CD4-positive, alpha-beta T cell (primary cell): ENCODE measurements at regions of chr15 and their contacts with region 1.

Region 1: GRCh38 chr15:40906091-40906990 is 12.1 kb downstream of the VPS18 start:
- DNase-seq: peak; percentile 54 to 84 (median 66)
- ATAC-seq: peak; percentile 58
- H3K4me3 ChIP-seq: peak overlapping the region; percentile 70
- H3K4me3 Mint-ChIP-seq: peak overlapping the region; percentile 89
- H3K27ac ChIP-seq: peak overlapping the region; percentile 67 to 78
- H3K27ac Mint-ChIP-seq: peak overlapping the region; percentile 71
- H3K4me1 ChIP-seq: peaks cover 51% of the 10 kb centered on the region
- H3K4me1 Mint-ChIP-seq: peaks cover 37% of the 10 kb centered on the region
- H3K27me3 ChIP-seq: no peaks in the 10 kb centered on the region
- H3K27me3 Mint-ChIP-seq: no peaks in the 10 kb centered on the region
- CTCF ChIP-seq: peak; percentile 89

Region 2: GRCh38 chr15:40857601-40858341 is 48.6 kb before region 1 on chr15:
- CTCF ChIA-PET with region 1: interaction called, 21 read pairs
- POLR2A ChIA-PET with region 1: interaction called, 5 read pairs
- intact Hi-C with region 1: no loop called
- DNase-seq: peak; percentile 63 to 87 (median 77)
- ATAC-seq: peak; percentile 96
- H3K4me3 ChIP-seq: no peak overlapping the region
- H3K4me3 Mint-ChIP-seq: no peak overlapping the region
- H3K27ac ChIP-seq: no peak overlapping the region
- H3K27ac Mint-ChIP-seq: no peak overlapping the region
- H3K4me1 ChIP-seq: peaks cover 18% of the 10 kb centered on the region
- H3K4me1 Mint-ChIP-seq: peaks cover 14% of the 10 kb centered on the region
- H3K27me3 ChIP-seq: no peaks in the 10 kb centered on the region
- H3K27me3 Mint-ChIP-seq: no peaks in the 10 kb centered on the region
- CTCF ChIP-seq: peak; percentile 85

Region 3: DNA sequence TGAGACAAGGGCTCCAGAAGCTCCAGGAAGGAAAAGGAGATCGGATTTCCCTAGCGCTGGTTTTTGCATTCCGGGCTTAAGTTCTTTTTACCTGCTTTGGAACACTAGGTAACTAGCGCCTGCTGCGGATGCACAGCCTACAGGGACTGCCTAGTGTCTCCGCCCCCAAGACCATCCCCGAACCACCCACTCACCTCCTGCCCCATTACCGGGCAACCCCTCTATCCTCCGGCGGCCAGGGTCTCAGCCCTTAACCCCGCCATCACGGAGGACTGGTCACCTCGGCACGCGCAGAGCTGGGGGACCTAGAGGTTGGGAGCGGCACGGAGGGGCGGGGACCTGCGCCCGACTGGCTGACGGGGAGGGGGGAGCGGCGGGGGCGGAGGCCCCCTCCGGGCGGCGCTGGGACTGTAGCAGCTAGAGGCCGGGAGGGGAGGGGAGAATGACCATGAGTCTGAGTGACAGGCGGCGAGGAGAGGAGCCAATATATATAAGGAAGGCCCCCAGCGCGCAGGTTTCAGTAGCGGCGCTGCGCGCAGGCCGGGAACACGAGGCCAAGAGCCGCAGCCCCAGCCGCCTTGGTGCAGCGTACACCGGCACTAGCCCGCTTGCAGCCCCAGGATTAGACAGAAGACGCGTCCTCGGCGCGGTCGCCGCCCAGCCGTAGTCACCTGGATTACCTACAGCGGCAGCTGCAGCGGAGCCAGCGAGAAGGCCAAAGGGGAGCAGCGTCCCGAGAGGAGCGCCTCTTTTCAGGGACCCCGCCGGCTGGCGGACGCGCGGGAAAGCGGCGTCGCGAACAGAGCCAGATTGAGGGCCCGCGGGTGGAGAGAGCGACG is 22.7 kb after region 1 on chr15 and contains the start of gene DLL4:
- CTCF ChIA-PET with region 1: interaction called, 10 read pairs
- POLR2A ChIA-PET with region 1: interaction called, 23 read pairs
- intact Hi-C with region 1: no loop called
- DNase-seq: peak in 5 of 14 experiments; percentile 36 to 67 (median 48)
- ATAC-seq: peak; percentile 50
- H3K4me3 ChIP-seq: peak within 1 kb of the TSS; percentile 49
- H3K4me3 Mint-ChIP-seq: peak within 1 kb of the TSS; percentile 81
- H3K27ac ChIP-seq: no peak within 1 kb of the TSS
- H3K27ac Mint-ChIP-seq: no peak within 1 kb of the TSS
- H3K4me1 ChIP-seq: peaks cover 64% of the 10 kb centered on the region
- H3K4me1 Mint-ChIP-seq: peaks cover 56% of the 10 kb centered on the region
- H3K27me3 ChIP-seq: peaks cover 67 to 74% of the 10 kb centered on the region in 2 experiments
- H3K27me3 Mint-ChIP-seq: peaks cover 83% of the 10 kb centered on the region
- CTCF ChIP-seq: no peak
- total RNA-seq, gene DLL4: 0.11 to 0.14 TPM

Region 4: DNA sequence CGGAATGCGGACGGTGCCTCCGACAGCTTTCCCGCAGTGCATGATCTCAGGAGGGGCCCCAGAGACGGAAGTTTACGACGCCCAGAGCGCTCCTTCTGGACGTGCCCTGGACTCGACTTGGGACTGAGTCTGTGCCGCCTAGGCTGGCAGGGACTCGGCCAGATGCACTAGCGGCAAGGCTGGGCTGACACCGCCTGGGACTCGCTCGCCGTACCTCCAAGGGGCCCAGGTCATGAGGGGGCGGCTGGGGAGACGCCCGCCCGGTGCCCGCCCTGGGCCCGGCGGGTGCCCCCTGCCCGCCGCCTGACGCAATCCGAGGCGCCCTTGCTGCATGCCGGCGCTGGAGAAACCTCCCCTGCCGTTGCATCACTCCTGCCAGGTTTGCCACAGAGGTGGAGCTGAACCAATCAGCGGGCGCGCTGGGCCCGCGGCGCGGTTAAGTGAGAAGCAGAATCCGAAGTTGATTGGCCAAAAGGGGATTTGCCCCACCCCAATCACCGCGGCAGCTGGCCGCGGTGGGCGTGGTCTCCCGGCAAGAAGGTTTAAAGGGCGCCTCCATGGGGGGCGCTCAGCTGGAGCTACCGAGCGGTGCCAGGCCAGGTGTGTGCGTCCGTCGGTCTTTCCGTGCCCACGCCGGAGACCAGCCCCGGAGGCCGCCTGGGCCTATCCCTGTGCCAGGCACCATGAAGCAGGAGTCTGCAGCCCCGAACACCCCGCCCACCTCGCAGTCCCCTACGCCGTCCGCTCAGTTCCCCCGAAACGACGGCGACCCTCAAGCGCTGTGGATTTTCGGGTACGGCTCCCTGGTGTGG is 46.8 kb after region 1 on chr15 and contains the start of gene CHAC1:
- CTCF ChIA-PET with region 1: interaction called, 20 read pairs
- POLR2A ChIA-PET with region 1: interaction called, 4 read pairs
- intact Hi-C with region 1: loop called in 1 of 2 experiments (anchors 10 kb)
- DNase-seq: peak; percentile 87 to 98 (median 93)
- ATAC-seq: peak; percentile 96
- H3K4me3 ChIP-seq: peak within 1 kb of the TSS; percentile 81
- H3K4me3 Mint-ChIP-seq: peak within 1 kb of the TSS; percentile 96
- H3K27ac ChIP-seq: no peak within 1 kb of the TSS
- H3K27ac Mint-ChIP-seq: peak within 1 kb of the TSS; percentile 82
- H3K4me1 ChIP-seq: peaks cover 18% of the 10 kb centered on the region
- H3K4me1 Mint-ChIP-seq: peaks cover 10% of the 10 kb centered on the region
- H3K27me3 ChIP-seq: peaks cover 0 to 4% of the 10 kb centered on the region in 2 experiments
- H3K27me3 Mint-ChIP-seq: no peaks in the 10 kb centered on the region
- CTCF ChIP-seq: peak; percentile 20
- total RNA-seq, gene CHAC1: 0.42 to 0.47 TPM

Region 5: DNA sequence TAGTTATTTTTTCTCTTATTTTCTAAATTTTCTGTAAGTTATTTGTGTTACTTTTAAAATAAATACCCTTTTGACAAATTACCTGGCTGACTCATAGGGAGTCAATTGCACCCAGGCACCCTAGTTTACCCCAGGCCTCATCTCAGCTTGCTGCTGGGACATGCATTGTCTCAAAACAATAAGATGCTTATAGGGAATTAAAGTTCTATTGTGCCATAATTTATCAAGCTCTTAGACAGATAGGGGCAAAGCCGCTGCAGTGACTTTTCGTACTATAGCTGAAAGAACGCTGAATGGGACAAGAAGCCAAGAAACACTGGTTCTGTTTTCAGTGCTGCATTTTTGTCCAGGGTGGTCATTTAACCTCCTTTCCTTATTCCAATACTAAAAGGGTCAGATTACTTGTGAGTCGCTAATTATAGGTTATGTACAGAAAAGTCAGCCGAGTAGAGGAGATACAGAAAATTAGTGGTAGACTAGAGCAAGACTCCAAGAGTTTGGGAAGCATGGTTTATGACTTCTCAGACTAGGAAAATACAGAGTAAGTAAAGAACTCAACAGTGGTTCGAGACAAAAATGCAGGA is 274.0 kb after region 1 on chr15:
- CTCF ChIA-PET with region 1: interaction called, 23 read pairs
- POLR2A ChIA-PET with region 1: interaction called, 5 read pairs
- intact Hi-C with region 1: loop called (anchors 1 kb)
- DNase-seq: no peak
- ATAC-seq: no peak
- H3K4me3 ChIP-seq: no peak overlapping the region
- H3K4me3 Mint-ChIP-seq: no peak overlapping the region
- H3K27ac ChIP-seq: no peak overlapping the region
- H3K27ac Mint-ChIP-seq: no peak overlapping the region
- H3K4me1 ChIP-seq: no peaks in the 10 kb centered on the region
- H3K4me1 Mint-ChIP-seq: no peaks in the 10 kb centered on the region
- H3K27me3 ChIP-seq: peaks cover 0 to 3% of the 10 kb centered on the region in 2 experiments
- H3K27me3 Mint-ChIP-seq: peaks cover 5% of the 10 kb centered on the region
- CTCF ChIP-seq: no peak

Region 6: GRCh38 chr15:41483115-41483514 is 576.8 kb after region 1 on chr15:
- CTCF ChIA-PET with region 1: no interaction called
- POLR2A ChIA-PET with region 1: no interaction called
- intact Hi-C with region 1: no loop called
- DNase-seq: peak in 4 of 14 experiments; percentile 22 to 69 (median 68)
- ATAC-seq: peak; percentile 81
- H3K4me3 ChIP-seq: peak overlapping the region; percentile 11
- H3K4me3 Mint-ChIP-seq: peak overlapping the region; percentile 21
- H3K27ac ChIP-seq: peak overlapping the region in 1 of 2 donors; percentile 20
- H3K27ac Mint-ChIP-seq: peak overlapping the region; percentile 76
- H3K4me1 ChIP-seq: peaks cover 20% of the 10 kb centered on the region
- H3K4me1 Mint-ChIP-seq: peaks cover 17% of the 10 kb centered on the region
- H3K27me3 ChIP-seq: no peaks in the 10 kb centered on the region
- H3K27me3 Mint-ChIP-seq: peaks cover 4% of the 10 kb centered on the region
- CTCF ChIP-seq: no peak

Region 7: DNA sequence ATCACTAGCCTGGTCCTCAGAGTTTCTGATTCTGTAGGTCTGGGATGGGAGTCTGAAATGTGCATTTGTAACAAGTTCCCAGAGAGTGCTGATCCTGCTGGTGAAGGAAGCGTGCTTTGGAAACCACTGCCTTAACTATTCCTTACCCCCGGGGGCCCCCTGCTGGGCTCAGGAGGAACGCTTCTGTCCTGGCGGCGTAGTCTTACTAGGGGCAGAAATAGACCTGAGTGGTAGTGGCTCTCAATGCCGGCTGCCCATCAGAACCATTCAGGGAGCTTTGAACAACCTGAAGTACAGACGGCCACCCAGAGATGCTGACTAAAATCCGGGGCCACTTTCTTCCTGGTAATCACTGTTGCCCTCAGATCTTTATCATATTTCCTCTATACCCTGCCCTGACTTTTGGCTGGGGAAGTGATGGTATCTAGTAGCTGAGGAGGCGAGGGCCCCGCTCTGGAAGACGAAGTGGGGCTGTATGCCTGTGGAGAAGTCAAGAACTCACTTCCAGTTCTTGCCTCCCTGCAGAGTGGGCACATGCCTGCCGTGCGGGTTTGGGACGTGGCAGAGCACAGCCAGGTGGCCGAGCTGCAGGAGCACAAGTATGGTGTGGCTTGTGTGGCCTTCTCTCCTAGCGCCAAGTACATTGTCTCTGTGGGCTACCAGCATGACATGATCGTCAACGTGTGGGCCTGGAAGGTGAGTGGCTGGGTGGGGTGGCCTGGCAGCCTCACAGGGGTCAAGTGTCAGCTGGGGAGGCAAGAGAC is 905.3 kb after region 1 on chr15:
- CTCF ChIA-PET with region 1: no interaction called
- POLR2A ChIA-PET with region 1: no interaction called
- intact Hi-C with region 1: loop called in 1 of 2 experiments (anchors 10 kb)
- DNase-seq: peak; percentile 62 to 88 (median 70)
- ATAC-seq: peak; percentile 97
- H3K4me3 ChIP-seq: no peak overlapping the region
- H3K4me3 Mint-ChIP-seq: no peak overlapping the region
- H3K27ac ChIP-seq: no peak overlapping the region
- H3K27ac Mint-ChIP-seq: peak overlapping the region; percentile 43
- H3K4me1 ChIP-seq: peaks cover 19% of the 10 kb centered on the region
- H3K4me1 Mint-ChIP-seq: peaks cover 12% of the 10 kb centered on the region
- H3K27me3 ChIP-seq: no peaks in the 10 kb centered on the region
- H3K27me3 Mint-ChIP-seq: no peaks in the 10 kb centered on the region
- CTCF ChIP-seq: peak; percentile 92